Left cardiac atrium (tissue), 4 donors: ENCODE measurements at regions of chr11 and their contacts with region 1.

Region 1: DNA sequence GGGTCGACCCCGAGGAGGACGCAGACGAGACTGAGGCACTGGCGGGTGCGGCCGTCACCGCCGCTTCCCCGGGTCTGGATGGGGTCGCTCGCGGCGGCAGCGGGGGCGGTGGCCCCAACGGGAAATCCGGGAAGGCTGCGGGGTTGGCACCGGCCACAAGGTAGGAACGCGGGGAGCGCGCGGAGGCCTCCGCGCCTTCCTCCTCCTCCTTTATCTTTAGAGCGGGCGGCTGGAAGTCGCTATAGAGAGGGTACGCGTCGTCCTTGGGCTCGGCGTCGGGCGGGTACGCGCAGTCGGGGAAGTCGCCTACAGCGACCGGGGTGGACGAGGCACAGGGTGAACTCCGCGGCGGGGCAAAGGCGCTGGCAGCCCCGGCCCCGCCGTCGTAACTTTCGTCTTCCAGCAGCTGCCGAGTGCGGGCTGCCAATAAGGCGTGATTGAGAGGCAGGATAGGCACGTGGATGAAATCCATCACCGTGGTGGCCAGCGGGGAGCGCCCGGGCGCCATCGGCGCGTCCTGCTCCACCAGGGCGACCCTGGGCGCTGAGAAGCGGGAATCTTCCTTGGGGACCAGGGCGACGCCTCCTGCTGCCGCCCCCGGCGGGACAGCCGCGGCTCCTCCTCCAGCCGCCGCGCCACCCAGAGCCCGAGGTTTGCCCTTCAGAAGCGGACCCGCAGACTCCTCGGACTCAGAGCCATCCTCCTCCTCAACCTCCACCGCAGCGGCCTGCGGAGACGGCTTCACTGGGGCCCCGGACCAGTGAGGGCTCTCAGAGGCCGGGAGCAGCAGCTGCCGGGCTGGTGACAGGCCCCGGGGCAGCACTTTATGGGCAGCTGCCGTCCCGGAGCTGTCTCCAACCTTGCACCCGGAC is 1.7 kb downstream of the PGR start:
- DNase-seq: peak; percentile 55
- ATAC-seq: peak; percentile 52 to 62

Region 2: GRCh38 chr11:100970283-100971164 is 157.4 kb before region 1 on chr11:
- intact Hi-C with region 1: loop called in 1 of 2 experiments (anchors 10 kb)
- DNase-seq: no peak
- ATAC-seq: peak; percentile 76 to 79

Region 3: DNA sequence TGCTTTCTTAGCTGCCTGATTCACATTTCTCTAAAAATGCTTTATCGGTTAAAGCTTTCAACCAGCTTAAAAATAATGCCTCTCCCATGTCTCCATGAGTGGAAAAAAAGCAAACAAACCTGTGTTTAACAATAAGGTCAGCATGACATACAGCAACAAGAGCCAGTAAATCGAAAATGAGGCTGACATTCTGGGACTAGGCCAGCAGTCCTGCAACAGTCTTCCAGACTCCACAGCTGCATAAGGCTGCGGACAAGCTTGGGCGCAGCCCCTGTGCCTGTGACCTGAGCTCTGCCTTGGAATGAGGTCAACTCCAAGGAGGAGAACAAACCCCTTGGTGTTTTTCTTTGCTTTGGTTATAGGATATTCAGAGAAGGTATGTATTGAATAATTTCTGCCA is 93.9 kb before region 1 on chr11:
- intact Hi-C with region 1: loop called in 1 of 2 experiments (anchors 10 kb)
- DNase-seq: peak; percentile 66
- ATAC-seq: peak; percentile 93 to 94